Dorsolateral prefrontal cortex (tissue), 120 donors: ENCODE measurements at regions of chr13 and their contacts with region 1.

Region 1: GRCh38 chr13:28819735-28820098 is 422 bp upstream of the MTUS2 start:
- DNase-seq: peak in 6 of 10 donors; percentile 36 to 80 (median 60)
- H3K4me3 ChIP-seq: peak overlapping the region in 46 of 59 donors; percentile 32 to 73 (median 54)
- H3K27ac ChIP-seq: peak overlapping the region in 3 of 59 donors; percentile 61 to 76 (median 65)
- H3K27me3 ChIP-seq: peaks cover 0 to 46% (median 0%) of the 10 kb centered on the region in 45 donors
- CTCF ChIP-seq: peak in 20 of 56 donors; percentile 1 to 61 (median 27)

Region 2: GRCh38 chr13:28540612-28541011 is 279.1 kb before region 1 on chr13:
- intact Hi-C with region 1: no loop called
- DNase-seq: no peak
- H3K4me3 ChIP-seq: no peak overlapping the region
- H3K27ac ChIP-seq: no peak overlapping the region
- H3K27me3 ChIP-seq: peaks cover 0 to 21% (median 0%) of the 10 kb centered on the region in 45 donors
- CTCF ChIP-seq: no peak

Region 3: DNA sequence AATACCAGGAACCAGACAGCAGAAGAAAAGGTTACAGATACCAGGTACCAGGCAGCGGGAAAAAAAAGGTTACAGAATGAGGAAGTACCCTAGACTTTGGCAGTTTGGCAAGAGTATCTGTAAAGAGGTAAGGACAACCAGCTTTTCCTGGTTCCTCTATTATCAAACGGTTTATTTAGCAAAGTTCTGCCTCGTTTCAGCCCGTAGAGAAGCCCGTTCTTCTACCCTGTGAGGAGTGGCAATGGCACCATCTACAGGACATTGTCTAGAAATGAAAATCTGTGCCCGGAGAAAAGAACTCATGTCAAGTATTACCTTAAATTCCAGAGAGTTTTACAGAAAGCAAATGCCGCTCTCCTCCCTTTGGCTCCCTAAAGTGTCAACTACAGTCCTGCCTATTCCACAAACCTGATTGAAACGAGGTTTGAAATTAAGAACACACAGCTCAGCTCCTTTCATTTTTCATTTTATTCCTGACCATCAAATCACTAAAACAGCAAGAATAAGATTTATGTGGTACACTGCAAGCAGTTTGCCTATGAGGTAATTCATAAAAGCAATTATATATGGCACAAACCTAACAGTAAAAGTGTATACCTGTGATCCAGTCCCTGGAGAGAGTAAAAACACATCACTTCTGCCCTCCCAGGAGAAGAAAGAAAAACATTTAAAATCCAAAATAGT is 549.5 kb after region 1 on chr13:
- intact Hi-C with region 1: loop called (anchors 2 to 5 kb)
- DNase-seq: peak in 3 of 10 donors; percentile 11 to 25 (median 15)
- H3K4me3 ChIP-seq: no peak overlapping the region
- H3K27ac ChIP-seq: no peak overlapping the region
- H3K27me3 ChIP-seq: peaks cover 0 to 3% (median 0%) of the 10 kb centered on the region in 45 donors
- CTCF ChIP-seq: peak; percentile 35 to 79 (median 65)